IMR-90 (cell line): ENCODE measurements at regions of chr1 and their contacts with region 1.

Region 1: GRCh38 chr1:199684686-199685273 is 342.7 kb upstream of the NR5A2 start:
- DNase-seq: peak; percentile 82
- ATAC-seq: peak; percentile 91
- H3K4me3 ChIP-seq: no peak overlapping the region
- H3K27ac ChIP-seq: no peak overlapping the region
- H3K4me1 ChIP-seq: peaks cover 4% of the 10 kb centered on the region
- H3K27me3 ChIP-seq: no peaks in the 10 kb centered on the region
- CTCF ChIP-seq: peak; percentile 84
- POLR2A ChIP-seq: no peak
- RAD21 ChIP-seq: peak; percentile 93

Region 2: DNA sequence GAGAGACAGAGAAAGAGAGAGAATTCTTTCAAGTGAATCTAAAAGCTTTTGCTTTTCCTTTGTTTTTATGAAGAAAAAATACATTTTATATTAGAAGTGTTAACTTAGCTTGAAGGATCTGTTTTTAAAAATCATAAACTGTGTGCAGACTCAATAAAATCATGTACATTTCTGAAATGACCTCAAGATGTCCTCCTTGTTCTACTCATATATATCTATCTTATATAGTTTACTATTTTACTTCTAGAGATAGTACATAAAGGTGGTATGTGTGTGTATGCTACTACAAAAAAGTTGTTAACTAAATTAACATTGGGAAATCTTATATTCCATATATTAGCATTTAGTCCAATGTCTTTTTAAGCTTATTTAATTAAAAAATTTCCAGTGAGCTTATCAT is 928.3 kb before region 1 on chr1:
- CTCF ChIA-PET with region 1: no interaction called
- POLR2A ChIA-PET with region 1: no interaction called
- dilution Hi-C with region 1: no loop called
- in situ Hi-C with region 1: no loop called
- intact Hi-C with region 1: loop called (anchors 5 kb)
- DNase-seq: peak; percentile 36
- ATAC-seq: peak; percentile 72; the same call in 1 of the 2 replicates
- H3K4me3 ChIP-seq: no peak overlapping the region
- H3K27ac ChIP-seq: no peak overlapping the region
- H3K4me1 ChIP-seq: no peaks in the 10 kb centered on the region
- H3K27me3 ChIP-seq: no peaks in the 10 kb centered on the region
- CTCF ChIP-seq: peak; percentile 49
- POLR2A ChIP-seq: no peak
- RAD21 ChIP-seq: peak; percentile 44

Region 3: GRCh38 chr1:200139661-200140250 is 455.0 kb after region 1 on chr1:
- CTCF ChIA-PET with region 1: no interaction called
- POLR2A ChIA-PET with region 1: no interaction called
- dilution Hi-C with region 1: no loop called
- in situ Hi-C with region 1: no loop called
- intact Hi-C with region 1: loop called (anchors 10 kb)
- DNase-seq: peak; percentile 68
- ATAC-seq: peak; percentile 91
- H3K4me3 ChIP-seq: no peak overlapping the region
- H3K27ac ChIP-seq: no peak overlapping the region
- H3K4me1 ChIP-seq: no peaks in the 10 kb centered on the region
- H3K27me3 ChIP-seq: no peaks in the 10 kb centered on the region
- CTCF ChIP-seq: peak; percentile 66
- POLR2A ChIP-seq: no peak
- RAD21 ChIP-seq: peak; percentile 76

Region 4: GRCh38 chr1:200302192-200302920 is 617.6 kb after region 1 on chr1:
- CTCF ChIA-PET with region 1: no interaction called
- POLR2A ChIA-PET with region 1: no interaction called
- dilution Hi-C with region 1: no loop called
- in situ Hi-C with region 1: no loop called
- intact Hi-C with region 1: loop called (anchors 10 kb)
- DNase-seq: peak; percentile 47
- ATAC-seq: peak; percentile 83
- H3K4me3 ChIP-seq: peak overlapping the region; percentile 52
- H3K27ac ChIP-seq: no peak overlapping the region
- H3K4me1 ChIP-seq: peaks cover 4% of the 10 kb centered on the region
- H3K27me3 ChIP-seq: no peaks in the 10 kb centered on the region
- CTCF ChIP-seq: 0 out of 2 replicates have a peak, but pooled peaks have one; percentile 6
- POLR2A ChIP-seq: no peak
- RAD21 ChIP-seq: no peak

Region 5: DNA sequence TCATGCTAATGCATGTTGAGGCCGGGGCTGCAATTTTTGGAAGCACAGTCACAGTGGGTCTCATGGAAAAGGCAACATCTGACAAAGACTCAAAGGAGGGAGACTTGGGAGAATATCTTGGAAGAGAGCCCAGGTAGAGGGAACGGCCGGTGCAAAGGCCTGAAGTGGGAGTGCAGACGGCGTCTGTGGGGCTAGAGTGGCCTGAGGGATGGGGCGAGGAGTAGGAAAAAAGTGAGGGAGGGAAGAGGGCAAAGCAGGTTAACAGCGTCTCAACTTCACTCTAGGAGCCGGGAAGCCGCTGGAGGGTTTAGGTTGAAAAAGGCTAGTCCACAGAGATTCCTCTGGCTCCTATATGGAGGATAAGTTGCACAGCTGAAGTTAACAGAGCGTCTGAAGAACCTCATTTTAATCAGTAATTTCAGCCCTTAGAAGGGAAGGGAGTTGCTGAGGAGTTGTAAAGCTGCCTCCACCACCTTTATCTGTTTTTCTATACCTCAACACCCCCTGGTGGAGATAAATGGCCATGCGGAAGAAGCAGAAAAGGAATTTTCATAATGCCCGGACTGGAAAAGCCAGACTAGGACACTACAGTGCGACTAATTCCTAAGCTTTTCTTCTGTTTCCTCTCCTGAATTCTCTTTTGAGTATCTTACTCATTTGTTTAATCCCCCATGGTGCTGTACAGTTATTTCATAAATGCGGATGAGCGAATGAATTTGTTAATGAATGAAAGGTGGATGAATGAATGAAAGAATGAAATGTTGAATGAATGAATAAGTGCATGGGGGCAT is 803.8 kb after region 1 on chr1:
- CTCF ChIA-PET with region 1: interaction called, 3 read pairs
- POLR2A ChIA-PET with region 1: no interaction called
- dilution Hi-C with region 1: no loop called
- in situ Hi-C with region 1: no loop called
- intact Hi-C with region 1: loop called (anchors 1 kb)
- DNase-seq: peak; percentile 85
- ATAC-seq: peak; percentile 93
- H3K4me3 ChIP-seq: no peak overlapping the region
- H3K27ac ChIP-seq: peak overlapping the region; percentile 13
- H3K4me1 ChIP-seq: peaks cover 10% of the 10 kb centered on the region
- H3K27me3 ChIP-seq: no peaks in the 10 kb centered on the region
- CTCF ChIP-seq: peak; percentile 93
- POLR2A ChIP-seq: peak; percentile 53; the same call in 1 of the 2 replicates
- RAD21 ChIP-seq: peak; percentile 95